Ascending aorta (tissue), 2 donors: ENCODE measurements at regions of chr2 and their contacts with region 1.

Region 1: DNA sequence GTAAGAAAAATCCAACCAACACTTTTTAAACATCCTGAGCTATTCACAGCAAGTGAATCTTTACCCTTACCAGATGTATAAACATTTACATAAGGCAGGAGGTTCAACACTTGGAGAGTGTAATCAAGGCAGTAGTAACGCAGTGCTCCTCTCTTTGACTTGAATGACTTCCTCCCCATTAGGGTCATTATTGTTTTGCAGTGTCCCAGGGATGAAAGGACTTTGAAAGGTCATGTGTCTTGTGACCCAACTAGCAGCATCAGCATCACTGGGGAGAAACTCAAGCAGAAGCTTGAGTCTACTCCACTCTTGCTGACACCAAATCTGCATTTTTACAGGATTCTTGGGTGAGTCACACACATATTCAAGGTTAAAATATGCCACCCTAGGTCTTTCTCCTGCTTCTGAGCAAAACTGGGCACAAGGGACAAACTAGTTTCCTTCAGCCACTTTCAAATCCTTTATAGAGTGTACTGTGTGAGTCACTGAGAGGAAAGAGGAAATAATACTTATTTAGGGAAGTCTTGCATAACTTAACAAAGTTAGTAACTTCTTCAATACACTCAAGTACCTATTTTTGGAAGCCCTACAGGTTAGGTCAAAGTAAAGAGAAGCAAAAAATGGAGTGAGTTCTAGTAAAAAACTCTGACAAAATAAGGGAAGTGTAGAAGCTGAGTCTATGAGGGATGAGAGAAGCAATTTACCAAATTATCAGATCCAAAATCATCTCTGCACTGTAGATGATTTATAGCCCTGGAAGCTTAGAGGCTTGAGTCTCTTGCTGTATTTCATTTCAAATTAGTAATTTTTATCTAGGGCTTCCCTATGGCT is 51.0 kb upstream of the EML4 start:
- DNase-seq: peak in 1 of 2 donors; percentile 72
- H3K4me3 ChIP-seq: no peak overlapping the region
- H3K27ac ChIP-seq: peak overlapping the region; percentile 56 to 58
- H3K4me1 ChIP-seq: peaks cover 0 to 23% of the 10 kb centered on the region in 2 donors
- H3K27me3 ChIP-seq: no peaks in the 10 kb centered on the region
- CTCF ChIP-seq: no peak

Region 2: DNA sequence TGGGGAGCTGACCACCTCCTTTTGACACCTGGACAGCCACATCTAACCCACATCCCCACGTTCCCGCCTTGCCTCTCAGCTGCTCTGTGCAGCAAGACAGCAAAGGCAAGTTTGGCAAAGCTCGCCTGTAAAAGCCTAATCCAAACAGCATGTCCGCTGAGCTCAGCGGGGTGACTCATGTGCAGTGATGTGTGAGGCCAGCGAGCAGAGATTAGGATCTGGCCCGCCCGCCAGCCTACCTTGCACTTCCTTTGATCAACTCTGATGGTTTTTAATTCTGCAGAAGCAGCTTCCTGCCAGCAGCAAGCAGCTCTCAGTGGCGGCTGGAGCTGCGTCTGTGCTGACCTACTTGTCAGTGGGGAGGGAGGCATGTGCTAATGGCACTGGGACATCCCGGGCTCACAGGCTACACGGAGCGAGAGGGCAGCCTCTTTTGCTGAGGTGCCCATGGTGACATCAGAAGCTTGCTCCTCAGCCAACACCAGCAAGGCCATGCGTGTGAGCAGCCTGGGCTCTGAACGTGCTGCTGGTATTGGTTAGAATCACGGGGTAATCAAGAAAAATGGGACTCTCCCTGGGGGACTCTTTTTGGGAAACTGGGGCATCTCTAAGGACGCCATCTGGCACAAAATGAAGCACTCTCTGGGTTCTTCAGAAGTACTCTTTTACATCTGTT is 15.0 kb after region 1 on chr2:
- intact Hi-C with region 1: loop called (anchors 1 kb)
- DNase-seq: peak; percentile 82 to 95
- H3K4me3 ChIP-seq: peak overlapping the region; percentile 31 to 56
- H3K27ac ChIP-seq: peak overlapping the region; percentile 75 to 81
- H3K4me1 ChIP-seq: peaks cover 0 to 20% of the 10 kb centered on the region in 2 donors
- H3K27me3 ChIP-seq: no peaks in the 10 kb centered on the region
- CTCF ChIP-seq: no peak